Activated B cell treated with CpG ODN at 0.5 μM for 24 hours (primary cell): ENCODE measurements at regions of chrX and their contacts with region 1.

Region 1: GRCh38 chrX:12771445-12772069 is 19.7 kb upstream of the PRPS2 start:
- DNase-seq: peak; percentile 53
- ATAC-seq: peak; percentile 100
- H3K4me3 Mint-ChIP-seq: no peak overlapping the region
- H3K27ac Mint-ChIP-seq: no peak overlapping the region
- H3K4me1 Mint-ChIP-seq: peaks cover 9% of the 10 kb centered on the region
- H3K27me3 Mint-ChIP-seq: no peaks in the 10 kb centered on the region
- CTCF ChIP-seq: no peak

Region 2: GRCh38 chrX:11533211-11533651 is 1238.3 kb before region 1 on chrX:
- CTCF ChIA-PET with region 1: no interaction called
- POLR2A ChIA-PET with region 1: no interaction called
- intact Hi-C with region 1: loop called (anchors 1 kb)
- DNase-seq: no peak
- ATAC-seq: peak; percentile 99
- H3K4me3 Mint-ChIP-seq: no peak overlapping the region
- H3K27ac Mint-ChIP-seq: no peak overlapping the region
- H3K4me1 Mint-ChIP-seq: peaks cover 3% of the 10 kb centered on the region
- H3K27me3 Mint-ChIP-seq: no peaks in the 10 kb centered on the region
- CTCF ChIP-seq: peak; percentile 44

Region 3: GRCh38 chrX:12080265-12080664 is 691.3 kb before region 1 on chrX:
- CTCF ChIA-PET with region 1: interaction called, 9 read pairs
- POLR2A ChIA-PET with region 1: no interaction called
- intact Hi-C with region 1: loop called (anchors 1 kb)
- DNase-seq: no peak
- ATAC-seq: no peak
- H3K4me3 Mint-ChIP-seq: no peak overlapping the region
- H3K27ac Mint-ChIP-seq: no peak overlapping the region
- H3K4me1 Mint-ChIP-seq: no peaks in the 10 kb centered on the region
- H3K27me3 Mint-ChIP-seq: peaks cover 2% of the 10 kb centered on the region
- CTCF ChIP-seq: no peak

Region 4: DNA sequence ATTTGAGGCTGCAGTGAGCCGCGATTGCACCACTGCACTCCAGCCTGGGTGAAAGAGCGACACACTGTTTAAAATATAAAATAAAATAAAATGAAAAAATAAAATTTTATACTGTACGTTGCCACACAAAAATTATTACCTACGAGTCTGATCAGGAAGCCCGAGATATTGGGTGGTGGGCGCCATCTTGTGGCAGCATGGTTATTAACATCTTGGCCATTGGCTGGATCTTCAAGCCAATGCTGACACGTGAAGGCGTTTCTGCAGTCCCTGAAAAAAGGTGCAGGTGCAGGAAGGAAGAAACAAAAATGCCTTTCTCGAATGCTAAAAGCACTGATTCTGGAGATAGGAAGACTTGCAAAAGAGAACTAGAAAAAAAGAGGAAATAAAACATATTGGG is 129.9 kb after region 1 on chrX:
- CTCF ChIA-PET with region 1: no interaction called
- POLR2A ChIA-PET with region 1: no interaction called
- intact Hi-C with region 1: loop called (anchors 1 kb)
- DNase-seq: peak; percentile 41
- ATAC-seq: peak; percentile 71
- H3K4me3 Mint-ChIP-seq: no peak overlapping the region
- H3K27ac Mint-ChIP-seq: peak overlapping the region; percentile 60
- H3K4me1 Mint-ChIP-seq: peaks cover 4% of the 10 kb centered on the region
- H3K27me3 Mint-ChIP-seq: no peaks in the 10 kb centered on the region
- CTCF ChIP-seq: no peak